GM23248 (cell line): ENCODE measurements at regions of chr12 and their contacts with region 1.

Region 1: DNA sequence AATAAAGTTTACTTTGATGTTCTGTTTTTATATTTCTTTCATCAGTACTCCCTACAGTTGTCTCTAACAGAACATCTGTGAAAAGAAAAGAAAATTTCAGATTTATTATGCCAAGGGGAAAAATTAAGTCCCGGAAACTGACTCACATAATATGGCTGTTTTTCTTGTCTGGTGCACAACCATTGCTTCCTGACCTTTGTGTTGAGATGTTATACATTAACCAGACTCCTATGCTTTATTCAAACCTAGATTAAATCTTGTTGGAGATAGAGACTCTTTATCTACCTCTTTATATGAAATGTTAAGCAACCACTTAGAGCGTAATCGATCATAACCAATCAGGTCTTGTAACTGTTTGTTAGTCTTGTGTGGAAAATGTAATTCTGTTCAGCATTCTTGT is 37.6 kb upstream of the BICD1 start:
- DNase-seq: peak; percentile 29
- H3K4me3 ChIP-seq: no peak overlapping the region
- H3K27ac ChIP-seq: no peak overlapping the region
- H3K4me1 ChIP-seq: peaks cover 11% of the 10 kb centered on the region
- H3K27me3 ChIP-seq: no peaks in the 10 kb centered on the region

Region 2: GRCh38 chr12:32302218-32303173 is 233.4 kb after region 1 on chr12:
- in situ Hi-C with region 1: loop called (anchors 5 kb)
- DNase-seq: peak; percentile 45
- H3K4me3 ChIP-seq: no peak overlapping the region
- H3K27ac ChIP-seq: no peak overlapping the region
- H3K4me1 ChIP-seq: no peaks in the 10 kb centered on the region
- H3K27me3 ChIP-seq: no peaks in the 10 kb centered on the region